Naive thymus-derived CD4-positive, alpha-beta T cell (primary cell): ENCODE measurements at regions of chr19 and their contacts with region 1.

Region 1: GRCh38 chr19:54115109-54116063 is at the starts of genes PRPF31 and TFPT:
- DNase-seq: peak; percentile 80 to 98 (median 97)
- ATAC-seq: peak; percentile 92
- H3K4me3 ChIP-seq: peak within 1 kb of the TSS; percentile 94
- H3K4me3 Mint-ChIP-seq: peak within 1 kb of the TSS; percentile 86 to 96 (median 94)
- H3K27ac ChIP-seq: peak within 1 kb of the TSS; percentile 88
- H3K27ac Mint-ChIP-seq: peak within 1 kb of the TSS; percentile 88 to 97 (median 94)
- H3K4me1 ChIP-seq: peaks cover 11 to 20% of the 10 kb centered on the region in 2 donors
- H3K4me1 Mint-ChIP-seq: peaks cover 23 to 48% (median 42%) of the 10 kb centered on the region in 7 donors
- H3K27me3 ChIP-seq: no peaks in the 10 kb centered on the region
- H3K27me3 Mint-ChIP-seq: peaks cover 0 to 2% (median 0%) of the 10 kb centered on the region in 5 donors
- total RNA-seq, gene PRPF31: 51.8 to 82.1 (median 71.0) TPM
- total RNA-seq, gene TFPT: 13.4 to 46.5 (median 14.6) TPM

Region 2: GRCh38 chr19:53394974-53395839 is 720.2 kb before region 1 on chr19 and contains the start of gene ZNF765:
- CTCF ChIA-PET with region 1: no interaction called
- POLR2A ChIA-PET with region 1: no interaction called
- intact Hi-C with region 1: no loop called
- DNase-seq: peak; percentile 92 to 99 (median 97)
- ATAC-seq: peak; percentile 100
- H3K4me3 ChIP-seq: peak within 1 kb of the TSS; percentile 97
- H3K4me3 Mint-ChIP-seq: peak within 1 kb of the TSS; percentile 88 to 97 (median 93)
- H3K27ac ChIP-seq: peak within 1 kb of the TSS; percentile 82
- H3K27ac Mint-ChIP-seq: peak within 1 kb of the TSS; percentile 89 to 97 (median 94)
- H3K4me1 ChIP-seq: peaks cover 5 to 8% of the 10 kb centered on the region in 2 donors
- H3K4me1 Mint-ChIP-seq: peaks cover 13 to 40% (median 31%) of the 10 kb centered on the region in 7 donors
- H3K27me3 ChIP-seq: no peaks in the 10 kb centered on the region
- H3K27me3 Mint-ChIP-seq: no peaks in the 10 kb centered on the region
- total RNA-seq, gene ZNF765: 5.1 to 19.5 (median 11.4) TPM

Region 3: DNA sequence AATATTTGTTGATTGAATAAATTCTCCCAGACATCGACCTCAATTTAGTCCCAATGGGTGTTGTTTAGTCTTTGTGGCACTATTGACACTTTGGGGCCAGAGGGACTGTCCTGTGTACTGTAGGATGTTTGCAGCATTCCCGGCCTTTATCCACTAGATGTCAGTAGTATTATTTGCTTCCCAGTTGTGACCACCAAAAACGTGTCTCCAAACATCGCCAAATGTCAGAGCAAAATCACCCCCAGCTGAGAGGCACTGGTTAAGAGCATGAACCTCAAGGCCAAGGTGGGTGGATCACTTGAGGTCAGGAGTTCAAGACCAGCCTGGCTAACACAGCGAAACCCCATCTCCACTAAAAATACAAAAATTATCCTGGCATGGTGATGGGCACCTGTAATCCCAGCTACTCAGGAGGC is 306.7 kb before region 1 on chr19:
- CTCF ChIA-PET with region 1: no interaction called
- POLR2A ChIA-PET with region 1: no interaction called
- intact Hi-C with region 1: no loop called
- DNase-seq: no peak
- ATAC-seq: peak; percentile 48
- H3K4me3 ChIP-seq: no peak overlapping the region
- H3K4me3 Mint-ChIP-seq: no peak overlapping the region
- H3K27ac ChIP-seq: no peak overlapping the region
- H3K27ac Mint-ChIP-seq: no peak overlapping the region
- H3K4me1 ChIP-seq: no peaks in the 10 kb centered on the region
- H3K4me1 Mint-ChIP-seq: no peaks in the 10 kb centered on the region
- H3K27me3 ChIP-seq: no peaks in the 10 kb centered on the region
- H3K27me3 Mint-ChIP-seq: peaks cover 0 to 4% (median 0%) of the 10 kb centered on the region in 5 donors

Region 4: DNA sequence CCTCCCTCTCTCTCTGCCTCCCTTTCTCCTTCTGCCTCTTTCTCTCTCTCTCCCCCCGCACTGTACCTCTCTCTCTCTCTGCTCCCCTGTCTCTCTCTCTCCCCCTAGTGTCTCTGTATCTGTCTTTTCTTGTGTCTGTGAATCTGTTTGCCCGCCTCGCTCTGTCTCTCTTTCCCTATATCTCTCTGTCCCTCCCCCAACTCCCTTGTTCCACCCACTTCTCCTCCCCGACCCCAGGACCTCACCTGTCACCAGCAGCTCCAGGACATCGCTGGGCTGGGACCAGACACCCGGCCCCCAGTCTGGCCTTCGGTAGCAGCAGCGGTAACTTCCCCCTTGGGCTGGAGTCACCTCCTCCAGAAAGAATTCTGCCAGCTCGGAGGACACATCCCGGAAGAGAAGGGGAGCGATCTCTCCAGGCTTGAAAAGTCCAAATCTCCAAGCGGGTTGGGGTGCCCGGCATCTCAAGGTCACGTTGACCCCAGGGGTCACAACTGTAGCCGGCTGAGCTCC is 18.7 kb before region 1 on chr19:
- CTCF ChIA-PET with region 1: interaction called, 3 read pairs
- POLR2A ChIA-PET with region 1: interaction called, 41 read pairs
- intact Hi-C with region 1: loop called in 1 of 2 experiments (anchors 2 kb)
- DNase-seq: peak in 3 of 9 donors; percentile 29 to 43 (median 41)
- ATAC-seq: peak; percentile 46
- H3K4me3 ChIP-seq: no peak overlapping the region
- H3K4me3 Mint-ChIP-seq: peak overlapping the region in 9 of 10 donors; percentile 5 to 87 (median 70)
- H3K27ac ChIP-seq: peak overlapping the region; percentile 14
- H3K27ac Mint-ChIP-seq: peak overlapping the region; percentile 7 to 80 (median 60)
- H3K4me1 ChIP-seq: peaks cover 7 to 11% of the 10 kb centered on the region in 2 donors
- H3K4me1 Mint-ChIP-seq: peaks cover 9 to 30% (median 20%) of the 10 kb centered on the region in 7 donors
- H3K27me3 ChIP-seq: no peaks in the 10 kb centered on the region
- H3K27me3 Mint-ChIP-seq: peaks cover 6 to 24% (median 15%) of the 10 kb centered on the region in 5 donors

Region 5: GRCh38 chr19:54137086-54137921 is 21.9 kb after region 1 on chr19 and contains the start of gene CNOT3:
- CTCF ChIA-PET with region 1: interaction called, 5 read pairs
- POLR2A ChIA-PET with region 1: interaction called, 86 read pairs
- intact Hi-C with region 1: loop called (anchors 1 kb)
- DNase-seq: peak; percentile 90 to 100 (median 100)
- ATAC-seq: peak; percentile 88
- H3K4me3 ChIP-seq: peak within 1 kb of the TSS; percentile 66
- H3K4me3 Mint-ChIP-seq: peak within 1 kb of the TSS; percentile 87 to 98 (median 90)
- H3K27ac ChIP-seq: peak within 1 kb of the TSS; percentile 97
- H3K27ac Mint-ChIP-seq: peak within 1 kb of the TSS; percentile 85 to 94 (median 92)
- H3K4me1 ChIP-seq: peaks cover 19 to 30% of the 10 kb centered on the region in 2 donors
- H3K4me1 Mint-ChIP-seq: peaks cover 33 to 60% (median 46%) of the 10 kb centered on the region in 7 donors
- H3K27me3 ChIP-seq: no peaks in the 10 kb centered on the region
- H3K27me3 Mint-ChIP-seq: no peaks in the 10 kb centered on the region
- total RNA-seq, gene CNOT3: 38.0 to 84.6 (median 63.9) TPM

Region 6: DNA sequence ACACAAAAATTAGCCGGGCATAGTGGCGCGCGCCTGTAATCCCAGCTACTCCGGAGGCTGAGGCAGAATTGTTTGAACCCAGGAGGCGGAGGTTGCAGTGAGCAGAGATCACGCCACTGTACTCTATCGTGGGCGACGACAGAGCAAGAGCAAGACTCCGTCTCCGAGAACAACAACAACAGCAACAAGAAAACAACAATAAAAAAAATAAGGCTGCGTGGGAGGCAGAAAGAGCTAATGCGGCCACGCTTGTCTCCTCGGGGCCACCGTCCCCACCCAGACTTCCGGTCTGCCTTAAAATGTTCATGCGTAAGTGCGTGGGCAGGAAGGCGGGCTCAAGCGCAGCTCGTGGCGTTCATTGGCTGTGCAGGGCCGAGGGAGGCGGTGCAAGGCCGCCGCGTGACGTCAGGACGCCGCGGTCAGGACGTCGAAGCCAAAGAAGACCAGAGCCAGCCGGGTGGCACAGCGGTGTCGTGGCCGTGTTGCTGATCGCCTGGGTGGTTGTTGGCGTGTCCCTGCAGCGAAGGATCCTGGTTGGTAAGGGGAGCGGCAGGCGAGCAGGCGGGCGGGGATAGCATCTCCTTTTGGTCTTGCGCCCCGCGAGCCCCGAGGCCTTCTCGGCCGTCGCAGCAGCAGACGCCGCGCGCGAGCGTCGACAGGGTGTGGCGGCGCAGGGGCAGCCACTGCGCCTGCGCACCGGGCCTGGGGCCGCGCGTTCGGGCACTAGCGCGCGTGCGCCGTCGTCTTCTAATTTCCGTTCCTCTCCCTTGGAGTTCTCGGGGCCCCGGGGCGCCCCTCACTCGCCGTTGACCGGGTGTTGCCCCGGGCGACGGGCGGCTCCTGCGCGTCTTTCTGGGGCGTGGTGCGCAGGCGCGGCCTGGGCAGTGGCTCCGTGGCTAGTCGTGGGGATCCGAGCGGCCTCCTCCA is 333.7 kb after region 1 on chr19 and contains the start of gene LENG8:
- CTCF ChIA-PET with region 1: no interaction called
- POLR2A ChIA-PET with region 1: interaction called, 3 read pairs
- intact Hi-C with region 1: loop called in 1 of 2 experiments (anchors 5 kb)
- DNase-seq: peak; percentile 95 to 99 (median 98)
- ATAC-seq: peak; percentile 94
- H3K4me3 ChIP-seq: peak within 1 kb of the TSS; percentile 85
- H3K4me3 Mint-ChIP-seq: peak within 1 kb of the TSS; percentile 93 to 99 (median 97)
- H3K27ac ChIP-seq: peak within 1 kb of the TSS; percentile 94
- H3K27ac Mint-ChIP-seq: peak within 1 kb of the TSS; percentile 97 to 100 (median 100)
- H3K4me1 ChIP-seq: peaks cover 19 to 39% of the 10 kb centered on the region in 2 donors
- H3K4me1 Mint-ChIP-seq: peaks cover 31 to 61% (median 54%) of the 10 kb centered on the region in 7 donors
- H3K27me3 ChIP-seq: no peaks in the 10 kb centered on the region
- H3K27me3 Mint-ChIP-seq: peaks cover 0 to 3% (median 0%) of the 10 kb centered on the region in 5 donors
- total RNA-seq, gene LENG8: 238 to 685 (median 503) TPM